Activated CD4-positive, alpha-beta memory T cell treated with anti-CD3 and anti-CD28 coated beads, Interleukin-2, amount 10 ng/mL, durations not matched to agents 7 days and 5 days (primary cell): ENCODE measurements at regions of chr1 and their contacts with region 1.

Region 1: GRCh38 chr1:156383023-156383422 is 14.0 kb downstream of the RHBG start:
- DNase-seq: peak; percentile 61
- H3K4me3 Mint-ChIP-seq: no peak overlapping the region
- H3K27ac Mint-ChIP-seq: no peak overlapping the region
- H3K4me1 Mint-ChIP-seq: peaks cover 4% of the 10 kb centered on the region
- H3K27me3 Mint-ChIP-seq: peaks cover 16% of the 10 kb centered on the region

Region 2: DNA sequence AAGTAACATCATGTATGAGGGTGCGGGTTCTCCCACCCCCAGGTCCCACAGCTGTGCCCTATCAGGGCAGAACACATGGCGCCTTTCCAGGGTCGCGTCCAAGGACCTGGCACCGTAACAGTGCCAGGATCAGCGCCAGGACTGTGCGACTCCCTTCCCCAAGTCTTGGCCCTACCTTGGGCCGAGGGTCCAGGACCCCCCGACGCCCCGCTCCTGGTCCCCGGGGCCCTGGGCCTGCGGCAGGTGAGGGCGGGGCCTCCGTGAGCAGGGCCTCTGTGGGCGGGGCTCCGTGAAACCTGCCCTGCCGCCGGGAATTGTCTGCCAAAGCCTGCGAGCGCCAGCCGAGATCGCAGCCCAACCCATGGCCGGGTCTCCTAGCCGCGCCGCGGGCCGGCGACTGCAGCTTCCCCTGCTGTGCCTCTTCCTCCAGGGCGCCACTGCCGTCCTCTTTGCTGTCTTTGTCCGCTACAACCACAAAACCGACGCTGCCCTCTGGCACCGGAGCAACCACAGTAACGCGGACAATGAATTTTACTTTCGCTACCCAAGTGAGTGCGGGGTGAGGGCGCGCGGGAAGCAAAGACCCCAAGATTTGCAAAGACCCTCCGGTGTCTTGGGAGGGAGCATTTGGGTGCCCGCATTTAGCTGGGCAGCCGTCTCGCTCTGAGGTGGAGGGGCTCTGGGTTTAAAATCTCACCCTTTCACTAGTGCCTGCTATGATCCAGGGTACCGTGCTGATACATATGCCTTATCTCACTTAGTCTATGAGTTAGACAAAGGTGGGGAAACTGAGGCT is 13.9 kb before region 1 on chr1 and contains the start of gene RHBG:
- CTCF ChIA-PET with region 1: interaction called, 58 read pairs
- POLR2A ChIA-PET with region 1: no interaction called
- DNase-seq: no peak
- H3K4me3 Mint-ChIP-seq: no peak within 1 kb of the TSS
- H3K27ac Mint-ChIP-seq: no peak within 1 kb of the TSS
- H3K4me1 Mint-ChIP-seq: peaks cover 4% of the 10 kb centered on the region
- H3K27me3 Mint-ChIP-seq: peaks cover 58% of the 10 kb centered on the region
- total RNA-seq, gene RHBG: not detected

Region 3: DNA sequence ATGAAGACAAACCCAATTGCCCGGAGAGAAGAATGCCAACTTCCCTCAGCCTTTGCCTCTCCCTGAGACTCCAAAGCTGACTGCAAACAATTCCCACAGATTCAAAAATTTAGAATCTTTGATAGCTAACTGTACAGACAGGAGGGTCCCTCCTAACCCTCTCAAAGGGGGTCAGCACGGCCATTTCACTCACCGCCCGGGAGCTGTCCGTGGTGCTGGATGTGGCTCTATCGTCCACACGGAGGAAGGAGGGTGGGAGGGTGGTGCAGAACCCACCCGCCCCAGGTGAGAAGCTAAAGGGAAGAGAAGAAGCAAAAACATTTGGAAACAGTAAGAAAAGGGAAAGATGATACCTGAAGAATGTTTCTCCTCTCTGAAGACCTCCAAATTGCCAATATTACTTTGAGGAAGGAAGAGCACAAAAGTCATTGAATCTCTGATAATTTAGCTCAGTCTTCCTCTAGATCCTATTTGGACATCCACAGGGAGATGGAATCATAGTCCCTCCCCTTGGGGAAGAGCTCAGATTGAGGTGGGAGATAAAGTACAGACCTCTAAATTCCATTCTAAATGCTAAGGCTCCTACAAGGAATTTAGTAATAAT is 31.5 kb after region 1 on chr1:
- CTCF ChIA-PET with region 1: interaction called, 36 read pairs
- POLR2A ChIA-PET with region 1: interaction called, 7 read pairs
- DNase-seq: peak; percentile 27
- H3K4me3 Mint-ChIP-seq: no peak overlapping the region
- H3K27ac Mint-ChIP-seq: no peak overlapping the region
- H3K4me1 Mint-ChIP-seq: peaks cover under 1% of the 10 kb centered on the region
- H3K27me3 Mint-ChIP-seq: peaks cover 60% of the 10 kb centered on the region

Region 4: GRCh38 chr1:156445789-156446263 is 62.8 kb after region 1 on chr1:
- CTCF ChIA-PET with region 1: interaction called, 330 read pairs
- POLR2A ChIA-PET with region 1: interaction called, 29 read pairs
- DNase-seq: peak; percentile 81
- H3K4me3 Mint-ChIP-seq: no peak overlapping the region
- H3K27ac Mint-ChIP-seq: no peak overlapping the region
- H3K4me1 Mint-ChIP-seq: peaks cover 16% of the 10 kb centered on the region
- H3K27me3 Mint-ChIP-seq: peaks cover 62% of the 10 kb centered on the region

Region 5: DNA sequence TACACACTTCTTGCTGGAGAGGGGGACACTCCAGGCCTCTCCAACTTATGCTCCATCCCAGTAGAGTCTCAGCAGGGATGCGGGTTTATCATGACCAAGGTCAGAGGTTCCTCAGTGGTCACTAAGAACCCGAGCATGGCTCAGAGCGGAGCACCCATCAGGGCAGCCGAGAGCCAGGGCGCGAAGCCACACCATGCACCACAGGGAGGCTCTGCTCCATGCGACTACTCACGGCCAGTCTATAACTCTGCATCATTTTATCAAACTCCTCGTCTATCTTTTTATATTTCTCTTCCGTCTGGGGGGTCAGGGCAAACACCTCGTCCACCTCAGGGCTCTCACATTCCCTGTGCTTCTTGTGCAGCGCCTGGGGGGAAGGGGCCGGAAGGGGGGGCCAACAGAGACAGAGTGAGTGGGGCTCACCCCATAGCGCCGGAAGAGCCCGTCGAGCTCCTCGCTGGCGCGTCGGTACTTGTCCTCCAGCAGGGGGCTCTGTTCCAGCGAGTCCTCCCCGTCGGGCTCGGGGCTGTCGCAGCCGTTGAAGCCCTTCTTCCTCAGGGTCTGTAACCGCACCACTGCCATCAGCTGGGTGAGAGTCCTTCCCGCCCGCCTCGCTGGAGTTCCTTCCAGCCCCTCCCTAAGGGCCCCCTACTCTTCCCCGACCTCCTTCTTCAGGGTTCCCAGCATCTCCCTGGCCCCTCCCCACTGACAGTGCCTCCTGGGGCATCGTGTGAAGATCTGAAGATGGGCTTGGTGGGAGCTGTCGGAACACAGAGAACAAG is 97.6 kb after region 1 on chr1:
- CTCF ChIA-PET with region 1: interaction called, 12 read pairs
- POLR2A ChIA-PET with region 1: no interaction called
- DNase-seq: peak; percentile 74
- H3K4me3 Mint-ChIP-seq: no peak overlapping the region
- H3K27ac Mint-ChIP-seq: peak overlapping the region; percentile 53
- H3K4me1 Mint-ChIP-seq: peaks cover 51% of the 10 kb centered on the region
- H3K27me3 Mint-ChIP-seq: no peaks in the 10 kb centered on the region

Region 6: GRCh38 chr1:156524481-156524869 is 141.5 kb after region 1 on chr1:
- CTCF ChIA-PET with region 1: interaction called, 16 read pairs
- POLR2A ChIA-PET with region 1: no interaction called
- DNase-seq: no peak
- H3K4me3 Mint-ChIP-seq: no peak overlapping the region
- H3K27ac Mint-ChIP-seq: peak overlapping the region; percentile 38
- H3K4me1 Mint-ChIP-seq: peaks cover 35% of the 10 kb centered on the region
- H3K27me3 Mint-ChIP-seq: peaks cover 3% of the 10 kb centered on the region

Region 7: DNA sequence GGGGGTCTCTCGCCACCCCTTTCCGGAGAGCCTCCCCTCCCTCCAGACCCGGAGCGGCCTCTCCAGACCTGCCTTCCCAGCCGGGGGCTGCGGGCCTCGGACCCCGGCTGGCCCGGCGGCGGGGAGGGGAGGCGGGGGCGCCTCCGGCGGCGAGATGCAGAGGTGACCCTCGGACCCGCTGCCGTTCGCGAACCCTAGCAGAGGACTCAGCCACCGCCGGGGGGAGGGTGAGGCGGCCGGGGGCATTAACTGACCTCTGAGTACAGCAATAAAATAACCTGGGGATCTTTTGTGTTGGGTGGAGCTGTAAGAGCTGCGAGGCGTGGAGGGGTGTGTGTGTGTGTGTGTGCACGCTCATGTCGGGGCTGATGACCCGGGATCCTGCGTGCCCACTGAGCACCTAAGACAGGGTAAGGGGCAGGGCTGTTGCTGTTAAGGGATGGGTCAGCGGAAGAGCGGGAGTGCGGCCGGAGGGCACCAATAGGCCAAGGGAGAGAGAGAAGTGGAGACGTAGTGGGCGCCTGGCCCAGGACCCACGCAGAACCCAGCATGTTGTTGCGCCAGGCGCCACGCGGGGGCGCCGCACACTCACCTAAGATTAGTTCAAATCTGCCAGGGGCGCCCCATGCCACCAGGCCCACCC is 242.5 kb after region 1 on chr1:
- CTCF ChIA-PET with region 1: interaction called, 10 read pairs
- POLR2A ChIA-PET with region 1: no interaction called
- DNase-seq: peak; percentile 62
- H3K4me3 Mint-ChIP-seq: peak overlapping the region; percentile 35
- H3K27ac Mint-ChIP-seq: no peak overlapping the region
- H3K4me1 Mint-ChIP-seq: peaks cover 12% of the 10 kb centered on the region
- H3K27me3 Mint-ChIP-seq: peaks cover 64% of the 10 kb centered on the region

Region 8: GRCh38 chr1:156936721-156937220 is 553.7 kb after region 1 on chr1:
- CTCF ChIA-PET with region 1: no interaction called
- POLR2A ChIA-PET with region 1: no interaction called
- DNase-seq: no peak
- H3K4me3 Mint-ChIP-seq: no peak overlapping the region
- H3K27ac Mint-ChIP-seq: no peak overlapping the region
- H3K4me1 Mint-ChIP-seq: no peaks in the 10 kb centered on the region
- H3K27me3 Mint-ChIP-seq: peaks cover 17% of the 10 kb centered on the region